ENCODE measurements at regions of chr14 and their contacts with region 1.

Region 1: DNA sequence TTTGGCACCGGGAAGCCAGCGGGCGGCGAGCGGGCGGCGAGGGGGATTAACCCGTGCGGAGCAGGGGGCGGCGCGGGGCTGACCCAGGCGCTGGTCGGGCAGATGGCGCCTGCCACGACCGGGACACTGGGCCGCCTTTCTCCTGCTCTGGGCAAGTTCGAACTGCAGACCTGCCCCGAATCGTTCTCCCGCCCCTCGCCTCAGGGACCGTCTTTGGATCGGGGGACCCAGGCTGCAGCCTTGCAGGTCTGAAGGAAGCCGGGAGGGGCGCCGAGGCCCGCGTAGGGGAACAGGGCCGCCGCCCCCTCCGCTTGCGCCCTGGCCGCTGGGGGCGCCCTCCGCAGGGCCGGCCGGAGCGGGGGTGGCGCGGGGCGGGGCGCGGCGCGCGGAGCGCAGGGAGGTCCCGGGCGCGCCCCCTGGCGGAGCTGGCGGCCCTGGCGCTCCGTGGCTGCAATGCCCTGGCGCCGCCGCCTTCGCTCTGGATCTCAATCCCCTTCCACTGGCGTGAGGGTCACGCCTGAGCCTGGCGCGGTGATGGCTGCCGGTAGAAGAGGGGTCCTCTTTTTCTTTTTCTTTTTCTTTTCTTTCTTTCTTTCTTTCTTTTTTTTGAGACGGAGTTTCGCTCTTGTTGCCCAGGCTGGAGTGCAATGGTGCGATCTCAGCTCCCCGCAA is 449 bp upstream of the LTBP2 start:
- DNase-seq: peak; percentile 66 to 94 (median 83)
- ATAC-seq: peak; percentile 79 to 85 (median 82)
- H3K4me3 ChIP-seq: peak overlapping the region; percentile 51 to 82 (median 66)
- H3K27ac ChIP-seq: no peak overlapping the region
- H3K4me1 ChIP-seq: peaks cover 0 to 13% (median 10%) of the 10 kb centered on the region in 3 donors
- H3K27me3 ChIP-seq: no peaks in the 10 kb centered on the region
- CTCF ChIP-seq: peak; percentile 45 to 63 (median 48)

Region 2: DNA sequence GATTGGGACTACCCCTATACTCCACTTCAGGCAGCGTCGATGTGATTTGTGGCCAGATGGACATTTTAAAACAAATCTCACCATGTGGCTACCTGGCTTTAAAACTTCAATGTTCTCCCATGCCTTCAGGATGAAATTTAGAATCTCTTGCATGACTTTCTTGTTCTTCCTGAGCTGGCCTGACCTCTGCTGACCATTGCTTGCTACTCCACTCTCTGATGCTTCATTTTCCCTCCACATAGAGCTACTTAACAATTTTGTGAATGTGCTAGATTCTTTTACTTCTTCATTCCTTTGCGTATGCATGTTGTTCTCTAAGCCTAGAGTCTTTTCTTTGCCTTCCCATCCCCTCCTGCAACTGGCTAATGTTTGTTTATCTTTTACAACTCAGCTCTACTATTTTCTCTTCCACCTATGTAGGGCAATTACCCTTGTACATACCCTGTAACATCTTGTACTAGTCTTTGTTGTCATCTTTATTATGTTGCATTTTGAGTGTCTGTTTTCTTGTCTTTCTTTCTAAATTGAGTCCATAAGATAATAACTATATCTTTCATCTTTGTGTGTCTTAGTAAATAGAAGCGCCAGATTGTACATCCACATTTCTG is 191.8 kb after region 1 on chr14:
- intact Hi-C with region 1: loop called in 1 of 3 experiments (anchors 10 kb)
- DNase-seq: peak in 1 of 6 donors; percentile 22
- ATAC-seq: peak; percentile 53 to 74 (median 61)
- H3K4me3 ChIP-seq: no peak overlapping the region
- H3K27ac ChIP-seq: no peak overlapping the region
- H3K4me1 ChIP-seq: no peaks in the 10 kb centered on the region
- H3K27me3 ChIP-seq: no peaks in the 10 kb centered on the region
- CTCF ChIP-seq: peak in 2 of 4 donors; percentile 21 to 40